ENCODE measurements at regions of chr10 and their contacts with region 1.

Region 1: GRCh38 chr10:122453806-122454460 is 520 bp upstream of the ARMS2 start:
- DNase-seq: no peak
- ATAC-seq: no peak
- H3K4me3 ChIP-seq: no peak overlapping the region
- H3K4me3 Mint-ChIP-seq: no peak overlapping the region
- H3K27ac ChIP-seq: no peak overlapping the region
- H3K27ac Mint-ChIP-seq: no peak overlapping the region
- H3K4me1 ChIP-seq: no peaks in the 10 kb centered on the region
- H3K4me1 Mint-ChIP-seq: no peaks in the 10 kb centered on the region
- H3K27me3 ChIP-seq: peaks cover 6 to 40% of the 10 kb centered on the region in 2 experiments
- H3K27me3 Mint-ChIP-seq: peaks cover 31 to 32% of the 10 kb centered on the region in 2 donors

Region 2: GRCh38 chr10:122126763-122127659 is 326.9 kb before region 1 on chr10:
- CTCF ChIA-PET with region 1: no interaction called
- POLR2A ChIA-PET with region 1: no interaction called
- DNase-seq: no peak
- ATAC-seq: no peak
- H3K4me3 ChIP-seq: no peak overlapping the region
- H3K4me3 Mint-ChIP-seq: no peak overlapping the region
- H3K27ac ChIP-seq: no peak overlapping the region
- H3K27ac Mint-ChIP-seq: no peak overlapping the region
- H3K4me1 ChIP-seq: no peaks in the 10 kb centered on the region
- H3K4me1 Mint-ChIP-seq: no peaks in the 10 kb centered on the region
- H3K27me3 ChIP-seq: peaks cover 0 to 6% of the 10 kb centered on the region in 2 experiments
- H3K27me3 Mint-ChIP-seq: peaks cover 11 to 12% of the 10 kb centered on the region in 2 donors

Region 3: GRCh38 chr10:122359621-122360020 is 94.3 kb before region 1 on chr10:
- CTCF ChIA-PET with region 1: no interaction called
- POLR2A ChIA-PET with region 1: interaction called in 1 of 2 experiments, 13 read pairs
- DNase-seq: no peak
- ATAC-seq: no peak
- H3K4me3 ChIP-seq: no peak overlapping the region
- H3K4me3 Mint-ChIP-seq: no peak overlapping the region
- H3K27ac ChIP-seq: no peak overlapping the region
- H3K27ac Mint-ChIP-seq: no peak overlapping the region
- H3K4me1 ChIP-seq: no peaks in the 10 kb centered on the region
- H3K4me1 Mint-ChIP-seq: no peaks in the 10 kb centered on the region
- H3K27me3 ChIP-seq: peaks cover 2 to 14% of the 10 kb centered on the region in 2 experiments
- H3K27me3 Mint-ChIP-seq: no peaks in the 10 kb centered on the region

Region 4: DNA sequence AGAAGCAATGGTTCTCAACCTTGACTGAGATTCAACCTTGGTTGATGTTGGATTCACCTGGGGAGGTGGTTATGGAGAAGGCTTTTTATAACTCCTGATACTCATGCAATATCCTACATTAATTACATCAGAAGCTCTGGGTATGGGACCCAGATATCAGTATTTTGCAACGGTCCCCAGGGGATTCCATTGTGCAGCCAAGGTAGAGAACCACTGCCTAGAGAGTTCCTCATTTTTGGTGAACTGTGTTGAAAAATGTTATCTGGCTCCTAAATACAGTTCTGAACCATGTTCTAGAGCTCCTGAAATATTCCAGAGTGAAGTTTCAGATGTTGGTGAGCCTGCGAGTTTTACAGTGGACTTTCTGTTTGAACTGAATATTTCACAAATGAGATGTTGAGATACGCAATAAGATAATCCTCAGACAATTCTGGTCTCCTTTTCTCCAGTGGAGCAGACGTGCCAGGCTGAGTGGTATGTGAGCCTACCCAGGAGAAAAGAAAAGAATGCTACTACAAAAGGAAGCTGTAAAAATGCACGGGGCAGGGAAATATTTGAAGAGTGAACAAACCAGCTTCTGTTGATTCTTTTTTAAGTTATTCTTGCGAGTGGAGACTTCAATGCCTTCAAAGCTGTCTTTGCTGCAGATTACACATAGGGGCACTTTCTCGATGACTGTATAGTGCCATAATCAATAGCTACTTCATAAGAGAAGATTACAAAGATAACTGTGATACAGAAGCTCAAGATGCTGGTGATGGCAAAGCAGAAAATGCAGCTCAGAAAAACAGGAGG is 259.4 kb after region 1 on chr10:
- CTCF ChIA-PET with region 1: no interaction called
- POLR2A ChIA-PET with region 1: no interaction called
- DNase-seq: no peak
- ATAC-seq: no peak
- H3K4me3 ChIP-seq: no peak overlapping the region
- H3K4me3 Mint-ChIP-seq: no peak overlapping the region
- H3K27ac ChIP-seq: no peak overlapping the region
- H3K27ac Mint-ChIP-seq: no peak overlapping the region
- H3K4me1 ChIP-seq: no peaks in the 10 kb centered on the region
- H3K4me1 Mint-ChIP-seq: no peaks in the 10 kb centered on the region
- H3K27me3 ChIP-seq: peaks cover 0 to 11% of the 10 kb centered on the region in 2 experiments
- H3K27me3 Mint-ChIP-seq: peaks cover 19 to 25% of the 10 kb centered on the region in 2 donors

Measured in T-cell (primary cell).